Activated T-helper 1 cell treated with anti-CD3 and anti-CD28 coated beads, Interleukin-12 subunit alpha, Interleukin-12 subunit beta, Interleukin-2, Interleukin-4 antibody, amounts not matched to agents 30 ng/mL and 10 ng/mL and 1 ng/mL, durations not matched to agents 14 hours and 24 hours and 36 hours (primary cell): ENCODE measurements at regions of chr5 and their contacts with region 1.

Region 1: DNA sequence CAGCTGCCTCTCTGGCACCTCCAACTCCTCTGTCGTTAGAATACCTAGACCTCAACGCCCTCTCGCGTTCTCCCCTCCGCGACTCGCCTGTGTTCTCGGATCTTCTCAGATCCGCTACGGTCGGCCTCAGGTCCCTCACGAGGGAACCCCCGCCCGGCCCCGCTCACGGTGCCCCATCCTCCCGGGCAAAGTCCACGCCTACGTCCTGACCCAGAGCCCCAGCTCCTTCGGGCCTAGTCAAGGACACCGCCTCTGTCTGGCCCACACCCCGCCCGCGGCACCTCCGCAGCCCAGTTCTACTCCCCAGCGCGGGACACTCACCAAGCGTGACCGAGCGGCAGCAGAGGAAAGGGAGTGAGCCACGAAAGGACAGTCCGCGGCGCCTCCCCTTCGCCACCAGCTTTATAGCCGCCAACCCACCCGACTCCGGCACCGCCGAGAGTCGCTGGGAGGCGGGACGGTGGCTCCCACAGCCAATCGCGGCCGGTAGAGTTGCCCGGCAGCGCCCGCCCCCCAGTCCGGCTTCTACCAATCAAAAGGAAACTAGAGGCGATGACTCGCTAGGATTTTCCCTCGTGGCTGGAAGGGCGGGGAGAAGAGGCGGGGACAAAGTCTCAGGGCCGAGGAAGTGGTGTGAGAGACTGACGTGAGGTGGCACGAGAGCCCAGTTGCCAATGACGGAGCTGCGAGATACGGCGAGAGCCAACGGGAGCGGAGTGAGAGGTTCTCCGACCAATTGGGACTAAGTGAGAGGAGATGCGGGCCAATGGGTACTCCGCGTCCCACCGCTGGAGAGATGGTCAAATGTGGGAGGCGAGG is at the start of gene HMGCS1:
- DNase-seq: peak; percentile 99
- H3K4me3 Mint-ChIP-seq: peak within 1 kb of the TSS; percentile 93
- H3K27ac Mint-ChIP-seq: peak within 1 kb of the TSS; percentile 98
- H3K4me1 Mint-ChIP-seq: peaks cover 73% of the 10 kb centered on the region
- H3K27me3 Mint-ChIP-seq: no peaks in the 10 kb centered on the region
- total RNA-seq, gene HMGCS1: 216 and 218 TPM in 2 replicates

Region 2: GRCh38 chr5:41869739-41870626 is 1443.3 kb before region 1 on chr5 and contains the start of gene OXCT1:
- intact Hi-C with region 1: loop called (anchors 10 kb)
- DNase-seq: peak; percentile 92
- H3K4me3 Mint-ChIP-seq: peak within 1 kb of the TSS; percentile 94
- H3K27ac Mint-ChIP-seq: peak within 1 kb of the TSS; percentile 96
- H3K4me1 Mint-ChIP-seq: peaks cover 56% of the 10 kb centered on the region
- H3K27me3 Mint-ChIP-seq: no peaks in the 10 kb centered on the region
- total RNA-seq, gene OXCT1: 84.4 and 85.1 TPM in 2 replicates

Region 3: DNA sequence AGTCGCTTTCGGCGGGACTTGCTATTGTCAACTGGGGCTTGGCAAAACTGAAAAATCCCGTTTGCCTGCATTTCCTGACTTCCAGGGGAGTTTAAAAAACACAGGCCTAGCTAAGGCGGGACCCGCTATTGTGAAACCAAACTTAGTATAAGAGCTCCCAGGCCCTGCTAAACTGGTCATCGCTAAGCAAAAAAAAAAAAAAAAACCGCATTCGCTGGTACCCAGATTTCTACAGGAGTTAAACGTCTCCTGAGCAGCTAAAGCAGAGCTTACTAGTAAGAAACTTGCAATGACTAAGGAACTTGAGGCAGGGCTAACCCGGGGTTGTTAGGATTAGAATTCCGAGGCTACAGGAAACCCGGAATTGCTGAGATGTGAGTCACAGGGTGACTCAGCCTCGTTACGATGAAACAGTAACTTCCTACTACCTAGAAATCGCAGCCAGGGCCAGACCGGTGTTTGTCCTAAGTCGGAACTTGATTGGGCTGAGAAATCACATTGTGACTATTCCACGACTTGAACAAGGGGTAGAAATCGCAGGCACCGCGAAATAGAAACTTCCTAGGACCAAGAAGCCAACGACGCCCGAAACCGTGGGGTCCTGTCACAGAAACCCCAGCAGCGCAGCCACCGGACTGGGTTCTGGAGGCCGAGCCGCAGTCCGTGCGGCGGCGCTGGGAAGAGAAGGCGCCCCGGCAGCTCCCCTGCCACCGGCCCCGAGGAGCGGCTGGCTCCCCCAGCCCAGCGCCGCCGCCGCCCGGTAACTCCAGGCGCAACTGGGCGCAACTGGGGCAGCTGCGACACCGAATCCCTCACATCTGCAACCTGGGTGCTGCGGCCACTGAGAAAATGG is 362.6 kb before region 1 on chr5:
- intact Hi-C with region 1: loop called (anchors 2 kb)
- DNase-seq: peak; percentile 60
- H3K4me3 Mint-ChIP-seq: peak overlapping the region; percentile 88
- H3K27ac Mint-ChIP-seq: peak overlapping the region; percentile 97
- H3K4me1 Mint-ChIP-seq: peaks cover 37% of the 10 kb centered on the region
- H3K27me3 Mint-ChIP-seq: peaks cover 8% of the 10 kb centered on the region

Region 4: GRCh38 chr5:43040287-43041098 is 272.8 kb before region 1 on chr5 and contains the start of gene ANXA2R:
- intact Hi-C with region 1: loop called (anchors 1 kb)
- DNase-seq: peak; percentile 93
- H3K4me3 Mint-ChIP-seq: peak within 1 kb of the TSS; percentile 82
- H3K27ac Mint-ChIP-seq: peak within 1 kb of the TSS; percentile 86
- H3K4me1 Mint-ChIP-seq: peaks cover 59% of the 10 kb centered on the region
- H3K27me3 Mint-ChIP-seq: no peaks in the 10 kb centered on the region
- total RNA-seq, gene ANXA2R: 0.88 and 0.93 TPM in 2 replicates

Region 5: DNA sequence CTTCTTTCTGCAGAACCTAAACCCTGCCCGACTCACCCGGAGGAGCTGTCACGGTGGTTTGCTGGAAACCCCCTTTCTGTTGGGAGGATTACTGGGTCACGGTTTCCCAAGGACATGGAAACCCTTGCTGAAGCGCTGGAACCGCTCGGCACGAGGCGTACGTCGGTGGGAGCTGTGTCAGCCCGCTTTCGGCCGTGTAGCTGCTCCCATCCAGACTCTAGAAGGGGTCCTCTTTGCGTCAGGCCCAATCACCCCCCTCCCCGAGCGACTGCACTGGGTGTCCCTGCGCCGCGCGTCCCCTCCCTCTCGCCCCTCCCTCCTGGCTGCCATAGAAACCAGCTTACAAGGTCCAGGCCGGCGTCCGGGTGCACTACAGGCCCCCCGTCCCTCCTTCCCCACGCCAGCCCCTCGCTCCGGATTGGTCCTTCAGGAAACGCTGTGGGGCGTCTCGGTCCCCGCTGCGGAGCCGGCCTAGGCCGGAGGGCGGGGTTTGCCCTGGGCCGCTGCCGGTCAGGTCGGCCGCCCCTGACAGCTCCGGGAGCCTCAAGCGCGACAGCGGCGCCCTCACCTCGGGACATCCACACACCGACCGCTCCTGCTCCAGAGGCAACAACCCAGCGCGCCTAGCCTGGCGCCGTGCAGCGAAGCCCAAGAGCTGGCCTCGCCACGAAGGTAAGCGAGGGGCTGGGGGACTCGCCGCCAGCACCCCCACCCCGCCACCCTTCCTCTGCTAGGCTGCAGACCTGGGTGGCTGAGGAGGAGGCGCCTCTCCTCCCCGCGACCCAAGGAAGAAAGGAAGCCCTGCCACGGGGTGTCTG is 121.3 kb before region 1 on chr5 and contains the start of gene NIM1K:
- intact Hi-C with region 1: loop called (anchors 1 kb)
- DNase-seq: peak; percentile 39
- H3K4me3 Mint-ChIP-seq: peak within 1 kb of the TSS; percentile 85
- H3K27ac Mint-ChIP-seq: peak within 1 kb of the TSS; percentile 89
- H3K4me1 Mint-ChIP-seq: peaks cover 40% of the 10 kb centered on the region
- H3K27me3 Mint-ChIP-seq: peaks cover 22% of the 10 kb centered on the region
- total RNA-seq, gene NIM1K: 0.39 and 0.67 TPM in 2 replicates

Region 6: GRCh38 chr5:43294226-43294625 is 19.0 kb before region 1 on chr5:
- intact Hi-C with region 1: no loop called
- DNase-seq: no peak
- H3K4me3 Mint-ChIP-seq: no peak overlapping the region
- H3K27ac Mint-ChIP-seq: no peak overlapping the region
- H3K4me1 Mint-ChIP-seq: peaks cover 40% of the 10 kb centered on the region
- H3K27me3 Mint-ChIP-seq: no peaks in the 10 kb centered on the region

Region 7: DNA sequence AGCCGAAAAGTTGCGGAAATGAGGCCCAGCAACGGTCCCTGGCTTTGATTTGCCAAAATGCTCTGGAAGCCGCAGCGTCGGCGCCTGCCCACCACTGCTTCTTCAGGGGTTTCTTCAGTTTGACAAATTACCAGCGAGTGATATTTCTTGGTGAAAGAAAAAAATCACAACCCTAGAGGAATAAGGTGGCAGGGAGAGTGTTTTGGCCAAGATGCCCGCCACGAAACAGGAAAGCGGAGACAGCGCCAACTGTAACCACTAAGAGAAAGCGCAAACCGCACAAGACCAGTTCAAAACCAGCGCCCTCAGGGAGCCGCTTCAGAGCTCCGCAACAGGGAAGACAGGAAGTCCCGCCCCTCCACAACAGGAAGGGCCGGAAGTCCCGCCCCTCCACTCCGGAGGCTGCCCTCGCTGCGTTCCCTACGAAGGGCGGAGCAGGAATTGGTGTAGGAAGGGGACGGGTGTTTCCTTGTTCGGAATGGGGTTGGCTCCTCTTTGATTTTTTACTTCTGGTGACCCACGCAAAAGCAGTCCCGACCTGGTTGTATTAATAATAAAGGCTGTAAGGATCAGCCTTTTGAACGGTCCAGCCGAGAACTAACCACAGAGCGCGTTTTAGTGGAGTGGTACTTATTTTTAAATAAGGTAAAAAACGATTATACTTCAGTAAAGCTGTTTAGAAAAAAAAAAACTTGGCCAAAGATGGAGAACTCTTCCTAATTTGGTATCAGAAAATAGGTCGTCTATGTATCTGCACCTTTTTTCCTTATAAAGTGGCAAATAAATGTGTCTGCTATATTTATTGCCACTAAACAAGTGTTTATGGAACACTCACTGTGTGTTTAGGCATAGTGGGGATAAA is 201.8 kb after region 1 on chr5 and contains the start of gene C5orf34:
- intact Hi-C with region 1: loop called (anchors 1 kb)
- DNase-seq: peak; percentile 92
- H3K4me3 Mint-ChIP-seq: peak within 1 kb of the TSS; percentile 94
- H3K27ac Mint-ChIP-seq: peak within 1 kb of the TSS; percentile 97
- H3K4me1 Mint-ChIP-seq: peaks cover 32% of the 10 kb centered on the region
- H3K27me3 Mint-ChIP-seq: peaks cover 2% of the 10 kb centered on the region
- total RNA-seq, gene C5orf34: 5.3 and 5.5 TPM in 2 replicates